ENCODE measurements at regions of chr7 and their contacts with region 1.

Region 1: DNA sequence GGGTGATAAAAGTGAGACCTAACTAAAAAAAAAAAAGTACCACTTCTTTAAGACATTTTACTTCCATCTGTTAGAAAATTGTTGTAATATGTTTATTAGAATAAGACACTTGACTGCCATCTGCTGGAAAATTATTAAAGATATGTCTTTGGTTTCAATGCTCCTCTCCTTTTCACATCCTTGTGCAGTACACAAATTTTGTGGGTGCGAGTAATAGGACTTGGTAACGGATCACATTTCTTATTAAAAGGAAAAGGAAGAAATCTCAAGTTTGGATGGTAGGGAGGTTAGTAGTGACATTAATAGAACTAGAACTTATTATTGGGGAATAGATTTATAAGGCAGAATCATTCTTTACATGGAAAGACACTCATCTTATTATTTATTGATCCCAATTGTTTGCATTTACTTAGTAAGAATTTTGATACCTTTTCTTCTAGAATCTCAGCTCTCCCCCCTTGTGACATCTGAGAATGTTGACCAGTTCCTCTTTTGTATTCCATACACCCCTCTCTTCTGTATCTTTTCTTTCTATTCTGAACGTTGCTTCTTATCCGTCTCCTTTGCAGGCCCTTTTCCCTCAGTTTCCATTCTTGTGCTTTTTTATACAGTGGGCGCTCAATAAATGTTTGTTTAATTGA is 43.1 kb upstream of the RPA3 start:
- DNase-seq: no peak
- H3K4me3 Mint-ChIP-seq: peak overlapping the region; percentile 83
- H3K27ac Mint-ChIP-seq: peak overlapping the region; percentile 76
- H3K4me1 Mint-ChIP-seq: peaks cover 34% of the 10 kb centered on the region
- H3K27me3 Mint-ChIP-seq: no peaks in the 10 kb centered on the region

Region 2: DNA sequence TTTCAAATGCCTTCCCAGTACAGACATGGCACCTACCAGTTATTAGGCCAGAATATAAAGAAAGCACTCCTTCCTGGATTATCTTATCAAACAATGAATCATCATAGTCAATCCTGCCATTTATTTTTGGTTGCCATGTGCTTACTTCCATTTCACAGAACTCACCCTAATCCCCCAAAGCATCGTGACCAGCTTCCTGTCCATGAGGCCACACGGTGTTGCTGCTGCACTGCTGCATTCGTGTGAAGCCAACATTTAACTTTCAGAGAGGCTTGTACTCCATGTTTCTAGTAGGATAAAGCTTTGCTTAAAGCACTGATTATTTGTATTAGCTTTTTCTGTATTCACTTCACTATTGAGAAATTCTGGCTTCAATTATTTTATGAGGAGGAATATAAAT is 240.2 kb before region 1 on chr7:
- CTCF ChIA-PET with region 1: no interaction called
- intact Hi-C with region 1: loop called (anchors 5 kb)
- DNase-seq: peak; percentile 6
- H3K4me3 Mint-ChIP-seq: no peak overlapping the region
- H3K27ac Mint-ChIP-seq: no peak overlapping the region
- H3K4me1 Mint-ChIP-seq: no peaks in the 10 kb centered on the region
- H3K27me3 Mint-ChIP-seq: no peaks in the 10 kb centered on the region

Region 3: GRCh38 chr7:7681179-7681935 is 80.1 kb before region 1 on chr7:
- CTCF ChIA-PET with region 1: interaction called, 50 read pairs
- intact Hi-C with region 1: loop called (anchors 1 kb)
- DNase-seq: peak; percentile 66
- H3K4me3 Mint-ChIP-seq: no peak overlapping the region
- H3K27ac Mint-ChIP-seq: peak overlapping the region; percentile 9
- H3K4me1 Mint-ChIP-seq: peaks cover 36% of the 10 kb centered on the region
- H3K27me3 Mint-ChIP-seq: no peaks in the 10 kb centered on the region

Region 4: DNA sequence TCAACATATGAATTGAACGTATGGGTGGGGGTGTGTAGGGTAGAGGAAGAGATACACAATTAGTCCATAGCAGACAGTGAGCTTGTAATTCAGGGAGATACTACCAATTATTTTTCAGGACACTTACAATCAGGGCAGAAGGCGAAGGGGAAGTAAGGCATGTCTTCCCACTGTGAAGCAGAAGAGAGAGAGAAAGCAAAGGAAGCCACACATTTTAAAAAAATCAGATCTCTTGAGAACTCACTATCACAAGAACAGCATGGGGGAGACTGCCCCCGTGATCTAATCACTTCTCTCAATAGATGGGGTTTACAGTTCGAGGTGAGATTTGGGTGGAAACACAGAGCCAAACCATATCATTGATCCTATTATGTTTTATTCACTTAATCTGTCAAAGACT is 73.3 kb after region 1 on chr7:
- CTCF ChIA-PET with region 1: no interaction called
- intact Hi-C with region 1: no loop called
- DNase-seq: no peak
- H3K4me3 Mint-ChIP-seq: no peak overlapping the region
- H3K27ac Mint-ChIP-seq: no peak overlapping the region
- H3K4me1 Mint-ChIP-seq: peaks cover 15% of the 10 kb centered on the region
- H3K27me3 Mint-ChIP-seq: no peaks in the 10 kb centered on the region

Region 5: GRCh38 chr7:8035647-8036518 is 274.4 kb after region 1 on chr7:
- CTCF ChIA-PET with region 1: no interaction called
- intact Hi-C with region 1: loop called (anchors 2 kb)
- DNase-seq: no peak
- H3K4me3 Mint-ChIP-seq: no peak overlapping the region
- H3K27ac Mint-ChIP-seq: no peak overlapping the region
- H3K4me1 Mint-ChIP-seq: peaks cover 20% of the 10 kb centered on the region
- H3K27me3 Mint-ChIP-seq: no peaks in the 10 kb centered on the region

Region 6: DNA sequence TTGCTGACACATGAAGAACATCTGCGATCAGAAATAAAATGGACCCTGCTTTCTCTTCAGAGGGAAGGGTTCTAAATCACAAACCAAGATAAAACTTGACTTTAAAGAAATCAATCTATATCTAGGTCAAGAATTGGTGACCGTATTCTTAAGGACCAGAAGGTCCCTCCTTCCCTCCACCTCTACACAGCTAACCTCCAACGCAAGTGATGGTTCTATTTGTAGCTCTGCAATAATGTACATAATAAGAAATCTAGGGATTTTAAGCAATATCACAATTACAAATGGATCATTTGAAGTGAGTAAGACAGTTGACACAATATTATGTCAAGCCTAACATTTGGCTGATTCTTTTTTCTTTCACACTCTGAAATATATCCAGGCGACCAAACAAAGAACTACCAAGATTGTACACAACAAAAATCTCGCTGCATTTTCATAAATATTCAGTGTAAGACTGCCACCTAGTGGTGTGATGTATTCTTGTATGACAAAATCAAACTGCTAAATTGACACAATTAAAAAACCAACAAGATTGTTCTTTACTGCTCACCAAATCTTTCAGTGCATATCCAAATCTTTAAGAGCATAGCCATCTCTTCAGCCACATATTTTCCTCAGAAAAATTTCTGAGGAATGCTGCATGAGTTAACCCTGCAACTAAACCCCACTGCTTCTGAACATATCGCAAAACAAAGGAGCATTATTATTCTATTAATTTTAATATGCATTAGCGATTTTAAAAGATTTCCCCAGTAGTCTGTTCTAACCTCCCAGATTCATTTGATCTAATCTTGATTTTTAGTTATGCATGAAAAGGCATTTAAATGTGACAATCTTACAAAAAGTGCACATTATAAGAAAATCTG is 456.0 kb after region 1 on chr7:
- CTCF ChIA-PET with region 1: interaction called, 4 read pairs
- intact Hi-C with region 1: loop called (anchors 1 kb)
- DNase-seq: peak; percentile 8
- H3K4me3 Mint-ChIP-seq: no peak overlapping the region
- H3K27ac Mint-ChIP-seq: no peak overlapping the region
- H3K4me1 Mint-ChIP-seq: peaks cover 2% of the 10 kb centered on the region
- H3K27me3 Mint-ChIP-seq: no peaks in the 10 kb centered on the region

Measured in activated naive CD4-positive, alpha-beta T cell treated with anti-CD3 and anti-CD28 coated beads for 36 hours (primary cell).